Mammary epithelial cell (primary cell): ENCODE measurements at regions of chr9 and their contacts with region 1.

Region 1: GRCh38 chr9:129166623-129167557 is 11.2 kb downstream of the IER5L start:
- DNase-seq: peak; percentile 89
- H3K4me3 ChIP-seq: peak overlapping the region; percentile 1 to 41 (median 34)
- H3K27ac ChIP-seq: peak overlapping the region; percentile 66
- H3K4me1 ChIP-seq: peaks cover 40% of the 10 kb centered on the region
- H3K27me3 ChIP-seq: no peaks in the 10 kb centered on the region
- CTCF ChIP-seq: no peak

Region 2: DNA sequence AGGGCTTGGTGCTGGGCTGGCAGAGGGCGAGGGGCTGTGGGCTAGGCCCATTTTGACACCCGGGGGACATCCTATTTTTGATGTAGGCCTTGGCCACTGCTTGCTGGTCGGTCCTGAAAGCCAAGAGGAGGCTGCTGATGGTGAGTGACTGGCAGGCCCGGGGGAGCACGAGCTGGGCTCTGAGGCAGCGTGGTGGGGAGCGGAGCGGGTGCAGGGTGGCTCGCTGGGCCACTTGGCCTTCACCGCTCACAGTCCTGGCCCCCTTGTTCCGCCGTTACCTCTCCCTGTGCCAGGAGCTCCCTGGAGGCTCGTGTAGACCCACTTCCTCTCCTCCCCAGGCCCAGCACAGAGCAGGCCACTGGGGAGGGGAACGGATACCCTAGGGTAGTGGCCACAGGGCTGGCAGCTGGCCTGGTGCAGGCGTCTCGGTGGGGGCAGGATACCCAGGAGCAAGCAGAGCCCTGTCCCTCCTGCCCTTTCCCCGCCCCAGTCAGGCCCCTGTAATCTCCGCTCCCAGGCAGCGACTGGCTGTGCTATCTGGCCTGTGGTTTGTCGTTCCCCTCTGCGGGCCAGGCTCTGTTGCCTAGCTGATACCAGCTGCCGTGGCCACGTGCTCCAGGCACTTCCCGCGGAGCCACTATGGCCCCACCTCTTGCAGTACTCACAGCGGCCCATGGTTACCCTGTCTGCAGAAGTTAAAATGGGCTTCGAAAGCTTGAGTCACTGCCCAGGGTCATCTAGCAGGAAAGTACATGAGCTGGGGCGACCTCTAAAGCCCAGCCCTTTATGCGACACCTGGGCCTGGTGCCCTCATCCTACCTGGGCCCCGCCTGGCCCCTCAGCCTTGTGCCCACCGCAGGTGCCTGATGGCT is 97.7 kb before region 1 on chr9:
- CTCF ChIA-PET with region 1: interaction called, 16 read pairs
- dilution Hi-C with region 1: no loop called
- in situ Hi-C with region 1: no loop called
- intact Hi-C with region 1: no loop called
- DNase-seq: no peak
- H3K4me3 ChIP-seq: no peak overlapping the region
- H3K27ac ChIP-seq: no peak overlapping the region
- H3K4me1 ChIP-seq: no peaks in the 10 kb centered on the region
- H3K27me3 ChIP-seq: no peaks in the 10 kb centered on the region
- CTCF ChIP-seq: no peak

Region 3: DNA sequence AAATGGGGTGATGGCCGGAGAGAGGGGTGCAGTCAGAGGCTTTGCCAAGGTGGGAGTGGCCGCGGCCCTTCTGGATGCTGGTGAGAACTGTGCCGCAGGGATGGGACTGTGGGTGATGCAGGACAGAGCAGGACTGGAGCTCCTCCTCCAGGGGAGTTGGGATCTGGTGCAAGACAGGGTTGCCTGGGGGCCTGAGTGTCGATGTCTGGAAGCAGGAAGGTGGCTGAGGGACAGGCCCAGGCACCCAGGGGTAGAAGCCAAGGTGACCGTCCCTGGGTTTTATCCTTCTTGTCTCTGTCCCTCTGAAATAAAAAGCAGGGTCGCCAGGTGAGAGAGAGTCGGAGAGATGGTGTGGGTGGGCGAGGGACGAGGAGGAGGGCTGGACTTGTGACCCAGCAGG is 100.3 kb after region 1 on chr9:
- CTCF ChIA-PET with region 1: no interaction called
- dilution Hi-C with region 1: loop called (anchors 5 kb)
- in situ Hi-C with region 1: no loop called
- intact Hi-C with region 1: no loop called
- DNase-seq: no peak
- H3K4me3 ChIP-seq: no peak overlapping the region
- H3K27ac ChIP-seq: no peak overlapping the region
- H3K4me1 ChIP-seq: peaks cover 16% of the 10 kb centered on the region
- H3K27me3 ChIP-seq: no peaks in the 10 kb centered on the region
- CTCF ChIP-seq: no peak

Region 4: DNA sequence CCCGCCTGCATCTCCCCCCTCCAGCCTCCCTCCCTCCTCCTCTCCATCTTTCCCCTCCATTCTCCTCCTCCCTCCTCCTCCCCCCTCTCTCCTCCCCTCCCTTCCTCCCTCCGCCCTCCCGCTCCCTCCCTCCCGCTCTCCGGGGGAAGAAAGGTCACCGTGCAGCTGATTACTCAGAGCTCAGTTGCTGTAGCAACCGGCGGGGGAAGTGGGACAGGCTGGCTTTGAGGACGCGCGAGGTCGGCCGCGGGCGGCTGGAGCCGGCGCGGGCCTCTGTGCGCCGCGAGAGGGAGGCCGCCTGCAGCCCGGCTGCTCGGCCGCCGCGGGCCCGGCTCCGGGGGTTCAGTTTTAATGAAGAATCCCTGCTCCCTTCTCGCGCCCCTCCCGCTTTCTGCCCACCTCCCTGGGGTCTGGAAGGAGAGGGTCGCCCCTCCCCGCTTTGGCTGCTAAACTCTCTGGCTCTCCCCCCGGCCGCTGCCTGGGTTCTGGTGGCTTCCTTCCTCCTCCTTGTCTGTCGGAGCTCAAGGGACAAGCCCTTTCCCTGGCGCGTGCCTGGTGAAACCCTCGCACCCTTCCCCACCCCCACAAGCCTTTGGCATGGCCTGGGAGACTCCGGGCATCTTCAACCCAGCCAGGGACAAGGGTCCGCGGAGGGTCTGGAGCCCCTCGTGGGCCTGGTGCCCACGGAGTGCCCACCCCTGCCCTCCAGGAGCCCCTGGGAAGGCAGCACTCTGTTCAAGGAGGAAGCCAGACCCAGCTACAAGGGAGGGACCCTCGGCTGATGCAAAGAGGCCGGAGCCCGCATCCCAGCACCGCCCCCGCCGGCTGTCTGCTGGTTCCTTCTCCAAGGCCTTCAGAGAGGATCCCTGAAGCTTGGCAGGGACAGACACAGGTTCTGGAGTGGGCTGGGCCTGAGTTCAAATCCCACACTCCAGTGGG is 293.7 kb after region 1 on chr9:
- CTCF ChIA-PET with region 1: no interaction called
- dilution Hi-C with region 1: no loop called
- in situ Hi-C with region 1: no loop called
- intact Hi-C with region 1: no loop called
- DNase-seq: peak; percentile 92
- H3K4me3 ChIP-seq: peak overlapping the region in 2 of 3 experiments; percentile 27 to 48
- H3K27ac ChIP-seq: peak overlapping the region; percentile 63
- H3K4me1 ChIP-seq: peaks cover 28% of the 10 kb centered on the region
- H3K27me3 ChIP-seq: no peaks in the 10 kb centered on the region
- CTCF ChIP-seq: peak in 1 of 2 donors; percentile 4